ENCODE measurements at regions of chr12 and their contacts with region 1.

Region 1: GRCh38 chr12:120079411-120080026 is 37.0 kb downstream of the RAB35 start:
- DNase-seq: peak; percentile 78
- ATAC-seq: peak; percentile 88
- H3K4me3 ChIP-seq: peak overlapping the region in 2 of 3 experiments; percentile 13 to 18; a peak in 2 of 6 replicates
- H3K27ac ChIP-seq: no peak overlapping the region
- H3K4me1 ChIP-seq: peaks cover 27% of the 10 kb centered on the region
- H3K27me3 ChIP-seq: no peaks in the 10 kb centered on the region
- CTCF ChIP-seq: no peak
- EP300 ChIP-seq: peak in 1 of 2 experiments; percentile 47; a peak in 1 of 4 replicates
- POLR2A ChIP-seq: no peak
- RAD21 ChIP-seq: no peak

Region 2: DNA sequence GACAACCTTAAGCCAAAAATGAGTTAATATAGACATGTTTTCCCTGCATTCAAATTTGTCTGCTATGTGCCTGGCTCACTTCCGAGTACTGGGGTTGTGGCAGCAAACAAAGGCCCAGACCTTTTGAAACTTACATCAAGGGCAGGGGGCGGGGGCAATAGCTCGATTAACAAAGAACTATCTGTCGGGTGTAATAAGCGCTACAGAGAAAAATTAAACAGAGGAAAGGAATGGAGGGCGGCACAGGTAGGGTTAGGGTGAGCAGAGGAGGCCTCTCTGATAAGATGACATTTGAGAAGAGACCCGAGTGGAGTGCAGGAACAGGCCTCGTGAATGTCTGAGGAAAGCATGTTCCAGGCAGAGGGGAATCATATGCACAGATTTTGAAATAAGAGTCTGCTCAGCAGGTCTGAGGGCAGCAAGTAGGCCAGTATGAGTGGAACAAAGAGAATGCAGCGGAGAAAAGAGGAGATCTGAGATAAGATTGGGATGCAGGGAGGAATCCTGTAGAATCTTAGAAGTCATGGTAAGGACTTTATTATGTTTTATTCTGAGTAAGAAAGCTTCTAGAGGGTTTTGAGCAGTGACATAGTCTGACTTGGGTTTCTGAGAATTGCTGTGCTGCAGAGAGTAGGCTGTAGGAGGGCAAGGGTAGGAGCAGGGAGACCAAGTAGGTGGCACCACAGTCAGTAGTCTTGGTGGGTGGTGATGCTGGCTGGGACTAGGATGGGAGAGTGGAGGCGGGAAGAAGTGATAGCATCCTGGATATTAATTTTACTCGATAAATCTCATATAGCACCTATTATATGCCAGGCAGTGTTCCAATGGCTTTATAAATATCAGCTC is 37.9 kb before region 1 on chr12:
- CTCF ChIA-PET with region 1: no interaction called
- POLR2A ChIA-PET with region 1: no interaction called
- in situ Hi-C with region 1: no loop called
- intact Hi-C with region 1: loop called (anchors 5 kb)
- DNase-seq: peak; percentile 90
- ATAC-seq: peak; percentile 97
- H3K4me3 ChIP-seq: peak overlapping the region in 2 of 3 experiments; percentile 1 to 13; a peak in 1 of 6 replicates
- H3K27ac ChIP-seq: peak overlapping the region; percentile 48
- H3K4me1 ChIP-seq: peaks cover 58% of the 10 kb centered on the region
- H3K27me3 ChIP-seq: no peaks in the 10 kb centered on the region
- CTCF ChIP-seq: no peak
- EP300 ChIP-seq: peak in 1 of 2 experiments; percentile 45; a peak in 1 of 4 replicates
- POLR2A ChIP-seq: peak in 1 of 2 experiments; percentile 23; a peak in 1 of 4 replicates
- RAD21 ChIP-seq: no peak

Region 3: DNA sequence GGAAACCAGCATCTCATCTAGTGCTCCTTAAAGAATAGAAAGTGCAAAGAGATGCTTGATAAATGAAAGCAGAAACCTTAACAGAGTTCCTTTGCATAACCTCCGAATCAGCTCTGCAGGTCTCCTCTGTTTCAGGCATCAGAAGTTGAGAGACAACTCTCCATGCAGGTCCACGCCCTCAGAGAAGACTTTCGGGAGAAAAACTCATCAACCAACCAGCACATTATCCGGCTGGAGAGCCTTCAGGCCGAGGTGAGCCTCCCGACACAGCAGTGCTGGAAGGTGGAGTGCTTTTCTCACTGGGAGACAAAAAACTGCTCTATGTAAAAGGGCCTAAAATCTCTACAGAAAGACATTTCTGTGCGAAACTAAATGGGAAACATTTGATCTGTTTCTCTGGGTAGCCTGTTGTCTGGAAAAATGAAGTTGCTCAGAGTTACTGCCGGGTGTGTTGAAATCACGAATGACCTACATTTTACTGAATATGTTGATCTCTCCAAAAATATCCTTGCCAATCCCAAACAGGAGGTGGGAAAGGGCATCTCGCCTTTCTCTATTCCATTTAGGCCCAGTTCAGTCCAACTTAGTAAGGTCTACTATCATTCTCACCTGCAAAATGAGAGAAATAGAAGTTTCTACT is 17.8 kb before region 1 on chr12:
- CTCF ChIA-PET with region 1: no interaction called
- POLR2A ChIA-PET with region 1: no interaction called
- in situ Hi-C with region 1: no loop called
- intact Hi-C with region 1: loop called (anchors 2 kb)
- DNase-seq: no peak
- ATAC-seq: no peak
- H3K4me3 ChIP-seq: no peak overlapping the region
- H3K27ac ChIP-seq: no peak overlapping the region
- H3K4me1 ChIP-seq: peaks cover 48% of the 10 kb centered on the region
- H3K27me3 ChIP-seq: no peaks in the 10 kb centered on the region
- CTCF ChIP-seq: no peak
- EP300 ChIP-seq: no peak
- POLR2A ChIP-seq: no peak
- RAD21 ChIP-seq: no peak

Region 4: DNA sequence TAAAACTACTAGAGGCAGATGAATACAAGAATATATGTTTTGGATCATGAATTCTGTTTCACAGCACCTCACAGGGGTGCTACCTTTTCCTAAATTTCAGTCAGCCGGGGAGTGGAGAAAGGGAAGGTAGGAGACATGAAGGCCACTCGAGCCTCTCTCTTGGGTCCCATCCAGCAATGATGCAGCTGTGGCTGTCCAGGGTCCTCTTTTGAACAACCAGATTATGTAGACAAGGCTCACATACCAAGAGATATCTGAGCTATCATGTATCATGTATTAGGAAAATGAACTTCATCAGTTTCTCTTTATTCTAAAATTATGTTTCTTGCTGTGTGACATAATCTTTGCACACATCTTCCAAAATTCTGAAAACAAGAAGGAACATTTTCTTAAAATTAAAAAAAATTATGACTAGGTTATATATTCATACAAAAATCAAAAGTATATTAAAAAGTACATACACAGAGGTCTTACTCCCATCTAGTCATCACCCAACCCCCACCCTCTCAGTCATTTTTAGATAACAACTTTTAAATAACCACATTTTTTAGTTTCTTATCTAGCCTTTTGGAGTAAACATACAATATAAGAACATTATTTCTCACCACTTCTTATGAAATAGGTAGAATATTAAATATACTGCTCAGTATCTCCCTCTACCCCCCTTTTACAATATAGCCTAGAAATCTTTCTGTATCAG is 734.8 kb after region 1 on chr12:
- CTCF ChIA-PET with region 1: no interaction called
- POLR2A ChIA-PET with region 1: no interaction called
- in situ Hi-C with region 1: no loop called
- intact Hi-C with region 1: no loop called
- DNase-seq: no peak
- ATAC-seq: no peak
- H3K4me3 ChIP-seq: no peak overlapping the region
- H3K27ac ChIP-seq: no peak overlapping the region
- H3K4me1 ChIP-seq: no peaks in the 10 kb centered on the region
- H3K27me3 ChIP-seq: no peaks in the 10 kb centered on the region
- CTCF ChIP-seq: no peak
- EP300 ChIP-seq: no peak
- POLR2A ChIP-seq: no peak
- RAD21 ChIP-seq: no peak